ENCODE measurements at regions of chr5 and their contacts with region 1.

Region 1: DNA sequence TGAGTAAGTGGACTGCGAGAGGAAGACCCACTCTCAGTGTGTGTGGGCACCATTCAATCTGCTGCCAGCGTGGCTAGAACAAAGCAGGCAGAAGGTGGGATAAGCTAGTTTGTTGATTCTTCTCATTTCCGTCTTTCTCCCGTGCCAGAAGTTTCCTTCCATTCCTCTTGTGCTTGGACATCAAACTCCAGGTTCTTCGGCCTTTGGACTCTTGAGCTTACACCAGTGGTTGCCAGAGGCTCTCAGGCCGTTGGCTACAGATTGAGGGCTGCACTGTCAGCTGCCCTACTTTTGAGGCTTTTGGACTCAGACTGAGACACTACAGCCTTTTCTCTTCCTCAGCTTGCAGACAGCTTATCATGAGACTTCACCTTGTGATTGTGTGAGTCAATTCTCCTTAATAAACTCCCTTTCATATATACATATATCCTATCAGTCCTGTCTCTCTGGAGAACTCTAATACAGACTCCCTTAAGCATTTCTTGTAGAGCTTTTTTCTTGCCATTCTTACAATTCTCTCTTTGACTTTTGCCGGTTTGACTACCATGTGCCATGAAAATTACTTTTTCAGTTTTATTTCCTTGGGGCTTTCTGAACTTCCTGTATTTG is 494.9 kb downstream of the PRR16 start:
- DNase-seq: no peak
- ATAC-seq: no peak
- H3K4me3 ChIP-seq: no peak overlapping the region
- H3K27ac ChIP-seq: no peak overlapping the region
- H3K4me1 ChIP-seq: no peaks in the 10 kb centered on the region
- H3K27me3 ChIP-seq: peaks cover 0 to 3% (median 0%) of the 10 kb centered on the region in 7 donors
- CTCF ChIP-seq: no peak

Region 2: GRCh38 chr5:119220576-119221197 is 1738.3 kb before region 1 on chr5:
- intact Hi-C with region 1: no loop called
- DNase-seq: no peak
- ATAC-seq: no peak
- H3K4me3 ChIP-seq: no peak overlapping the region
- H3K27ac ChIP-seq: no peak overlapping the region
- H3K4me1 ChIP-seq: no peaks in the 10 kb centered on the region
- H3K27me3 ChIP-seq: no peaks in the 10 kb centered on the region
- CTCF ChIP-seq: no peak

Region 3: DNA sequence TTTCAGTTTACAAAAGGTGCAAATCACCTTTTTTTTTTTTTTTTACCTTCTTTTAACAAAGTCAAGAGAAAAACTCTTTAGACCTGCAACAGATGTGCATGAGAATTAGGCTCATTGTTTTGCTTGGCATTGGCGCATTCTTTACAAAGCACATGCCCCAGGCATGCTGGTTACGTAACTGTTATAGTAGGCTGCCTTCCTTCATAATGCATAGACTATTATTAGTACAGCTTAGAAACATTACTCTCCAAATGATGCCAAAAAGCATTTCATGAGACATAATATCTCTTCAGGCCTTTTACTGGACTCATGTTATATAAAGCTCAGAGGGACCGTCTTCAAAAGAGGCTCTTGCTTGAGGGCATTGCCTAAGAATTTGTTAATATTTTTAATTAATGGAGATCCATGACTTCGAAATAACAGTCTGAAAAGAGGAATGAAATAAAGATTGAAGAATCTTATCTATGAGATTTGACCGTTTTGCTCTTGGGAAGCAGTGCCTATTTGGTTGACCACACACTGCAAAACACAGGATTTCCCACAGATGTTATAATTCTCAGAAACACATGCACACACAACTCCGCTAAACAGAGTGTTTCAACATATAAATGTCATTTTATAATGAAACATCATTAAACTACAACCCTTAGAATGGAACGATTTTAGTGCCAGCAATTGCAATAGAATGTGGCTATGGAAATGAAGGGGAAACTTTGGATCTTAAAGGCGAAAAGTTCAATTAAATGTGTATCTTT is 16.2 kb before region 1 on chr5:
- intact Hi-C with region 1: no loop called
- DNase-seq: no peak
- ATAC-seq: no peak
- H3K4me3 ChIP-seq: no peak overlapping the region
- H3K27ac ChIP-seq: no peak overlapping the region
- H3K4me1 ChIP-seq: no peaks in the 10 kb centered on the region
- H3K27me3 ChIP-seq: peaks cover 0 to 3% (median 0%) of the 10 kb centered on the region in 7 donors
- CTCF ChIP-seq: no peak

Region 4: GRCh38 chr5:120985526-120985925 is 26.5 kb after region 1 on chr5:
- intact Hi-C with region 1: loop called in 1 of 10 experiments (anchors 1 kb)
- DNase-seq: no peak
- ATAC-seq: no peak
- H3K4me3 ChIP-seq: no peak overlapping the region
- H3K27ac ChIP-seq: no peak overlapping the region
- H3K4me1 ChIP-seq: no peaks in the 10 kb centered on the region
- H3K27me3 ChIP-seq: peaks cover 0 to 3% (median 0%) of the 10 kb centered on the region in 7 donors
- CTCF ChIP-seq: no peak

Measured in heart right ventricle (tissue), 16 donors.